B cell (primary cell): ENCODE measurements at regions of chr7 and their contacts with region 1.

Region 1: GRCh38 chr7:105759670-105760550 is 116.5 kb downstream of the ATXN7L1 start:
- DNase-seq: peak; percentile 44
- ATAC-seq: no peak
- H3K4me3 ChIP-seq: no peak overlapping the region
- H3K4me3 Mint-ChIP-seq: no peak overlapping the region
- H3K27ac ChIP-seq: no peak overlapping the region
- H3K27ac Mint-ChIP-seq: no peak overlapping the region
- H3K4me1 ChIP-seq: no peaks in the 10 kb centered on the region
- H3K4me1 Mint-ChIP-seq: no peaks in the 10 kb centered on the region
- H3K27me3 ChIP-seq: no peaks in the 10 kb centered on the region
- H3K27me3 Mint-ChIP-seq: no peaks in the 10 kb centered on the region
- CTCF ChIP-seq: peak; percentile 55

Region 2: GRCh38 chr7:105776058-105776751 is 16.3 kb after region 1 on chr7:
- CTCF ChIA-PET with region 1: interaction called, 10 read pairs
- POLR2A ChIA-PET with region 1: no interaction called
- intact Hi-C with region 1: no loop called
- DNase-seq: no peak
- ATAC-seq: no peak
- H3K4me3 ChIP-seq: no peak overlapping the region
- H3K4me3 Mint-ChIP-seq: no peak overlapping the region
- H3K27ac ChIP-seq: no peak overlapping the region
- H3K27ac Mint-ChIP-seq: no peak overlapping the region
- H3K4me1 ChIP-seq: no peaks in the 10 kb centered on the region
- H3K4me1 Mint-ChIP-seq: no peaks in the 10 kb centered on the region
- H3K27me3 ChIP-seq: no peaks in the 10 kb centered on the region
- H3K27me3 Mint-ChIP-seq: no peaks in the 10 kb centered on the region
- CTCF ChIP-seq: no peak

Region 3: GRCh38 chr7:105876091-105876963 is 116.4 kb after region 1 on chr7 and contains the start of gene ATXN7L1:
- CTCF ChIA-PET with region 1: interaction called, 10 read pairs
- POLR2A ChIA-PET with region 1: no interaction called
- intact Hi-C with region 1: loop called (anchors 5 kb)
- DNase-seq: peak; percentile 87
- ATAC-seq: peak; percentile 99
- H3K4me3 ChIP-seq: peak within 1 kb of the TSS; percentile 47 to 68 (median 64)
- H3K4me3 Mint-ChIP-seq: peak within 1 kb of the TSS; percentile 90
- H3K27ac ChIP-seq: no peak within 1 kb of the TSS
- H3K27ac Mint-ChIP-seq: peak within 1 kb of the TSS; percentile 42
- H3K4me1 ChIP-seq: peaks cover 13 to 15% of the 10 kb centered on the region in 2 donors
- H3K4me1 Mint-ChIP-seq: peaks cover 23% of the 10 kb centered on the region
- H3K27me3 ChIP-seq: peaks cover 0 to 25% (median 8%) of the 10 kb centered on the region in 4 experiments
- H3K27me3 Mint-ChIP-seq: peaks cover 14% of the 10 kb centered on the region
- CTCF ChIP-seq: peak; percentile 31
- total RNA-seq, gene ATXN7L1: 37.0 and 40.6 TPM in 2 replicates

Region 4: GRCh38 chr7:105896407-105896911 is 136.5 kb after region 1 on chr7:
- CTCF ChIA-PET with region 1: no interaction called
- POLR2A ChIA-PET with region 1: no interaction called
- intact Hi-C with region 1: no loop called
- DNase-seq: no peak
- ATAC-seq: no peak
- H3K4me3 ChIP-seq: no peak overlapping the region
- H3K4me3 Mint-ChIP-seq: no peak overlapping the region
- H3K27ac ChIP-seq: no peak overlapping the region
- H3K27ac Mint-ChIP-seq: no peak overlapping the region
- H3K4me1 ChIP-seq: no peaks in the 10 kb centered on the region
- H3K4me1 Mint-ChIP-seq: no peaks in the 10 kb centered on the region
- H3K27me3 ChIP-seq: peaks cover 0 to 5% (median 1%) of the 10 kb centered on the region in 4 experiments
- H3K27me3 Mint-ChIP-seq: peaks cover 20% of the 10 kb centered on the region
- CTCF ChIP-seq: no peak

Region 5: DNA sequence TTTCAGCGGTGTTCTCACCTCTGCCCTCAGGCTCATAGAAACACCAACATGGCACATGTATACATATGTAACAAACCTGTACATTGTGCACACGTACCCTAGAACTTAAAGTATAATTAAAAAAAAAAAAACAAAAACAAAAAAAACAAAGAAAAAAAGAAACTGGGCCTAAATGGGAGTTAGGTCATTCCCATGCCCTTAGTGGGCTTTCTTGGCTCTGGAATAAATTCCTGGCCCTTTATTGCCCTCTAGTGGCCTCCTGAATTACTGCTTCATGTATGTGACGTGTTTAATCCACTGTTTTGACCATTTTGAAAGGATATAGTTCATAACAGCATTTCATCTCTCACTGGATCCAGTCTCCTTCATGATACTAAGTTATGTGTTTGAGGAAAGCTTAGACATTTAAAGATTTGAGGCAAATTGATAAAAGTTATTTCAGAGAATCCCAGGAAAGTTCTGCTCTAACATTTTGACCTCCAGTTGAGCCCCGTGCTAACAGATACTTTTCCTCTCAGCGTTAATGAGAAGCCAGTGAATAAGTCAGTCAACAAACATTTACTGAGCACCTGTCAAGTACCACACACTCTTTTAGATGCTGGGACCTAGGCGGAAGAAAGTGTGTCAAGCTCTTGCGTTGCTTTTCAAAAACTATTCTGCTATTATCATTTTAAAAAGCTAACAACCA is 406.9 kb after region 1 on chr7:
- CTCF ChIA-PET with region 1: interaction called, 45 read pairs
- POLR2A ChIA-PET with region 1: no interaction called
- intact Hi-C with region 1: loop called (anchors 1 kb)
- DNase-seq: peak; percentile 73
- ATAC-seq: peak; percentile 47
- H3K4me3 ChIP-seq: no peak overlapping the region
- H3K4me3 Mint-ChIP-seq: no peak overlapping the region
- H3K27ac ChIP-seq: no peak overlapping the region
- H3K27ac Mint-ChIP-seq: no peak overlapping the region
- H3K4me1 ChIP-seq: no peaks in the 10 kb centered on the region
- H3K4me1 Mint-ChIP-seq: peaks cover 10% of the 10 kb centered on the region
- H3K27me3 ChIP-seq: peaks cover 0 to 8% (median 0%) of the 10 kb centered on the region in 4 experiments
- H3K27me3 Mint-ChIP-seq: no peaks in the 10 kb centered on the region
- CTCF ChIP-seq: peak; percentile 95

Region 6: DNA sequence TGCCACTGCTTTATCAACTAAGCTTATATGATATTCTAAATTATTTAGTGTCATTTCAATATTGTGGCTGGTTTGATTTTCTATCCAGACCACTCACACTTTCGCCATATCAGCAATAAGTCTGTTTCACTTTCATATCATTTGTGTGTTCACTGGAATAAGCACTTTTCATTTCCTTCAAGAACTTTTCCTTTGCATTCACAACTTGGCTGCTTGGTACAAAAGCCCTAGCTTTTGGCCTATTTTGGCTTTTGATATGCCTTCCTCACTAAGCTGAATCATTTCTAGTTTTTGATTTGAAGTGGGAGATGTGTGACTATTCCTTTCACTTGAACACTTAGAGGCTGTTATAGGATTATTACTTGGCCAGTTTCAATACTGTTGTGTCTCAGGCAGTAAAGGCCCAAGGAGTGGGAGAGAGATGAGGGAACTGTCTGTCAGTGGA is 645.8 kb after region 1 on chr7:
- CTCF ChIA-PET with region 1: no interaction called
- POLR2A ChIA-PET with region 1: no interaction called
- intact Hi-C with region 1: no loop called
- DNase-seq: no peak
- ATAC-seq: no peak
- H3K4me3 ChIP-seq: no peak overlapping the region
- H3K4me3 Mint-ChIP-seq: no peak overlapping the region
- H3K27ac ChIP-seq: no peak overlapping the region
- H3K27ac Mint-ChIP-seq: no peak overlapping the region
- H3K4me1 ChIP-seq: no peaks in the 10 kb centered on the region
- H3K4me1 Mint-ChIP-seq: no peaks in the 10 kb centered on the region
- H3K27me3 ChIP-seq: peaks cover 0 to 3% (median 0%) of the 10 kb centered on the region in 4 experiments
- H3K27me3 Mint-ChIP-seq: peaks cover 35% of the 10 kb centered on the region
- CTCF ChIP-seq: no peak